ENCODE measurements at regions of chr1 and their contacts with region 1.

Region 1: DNA sequence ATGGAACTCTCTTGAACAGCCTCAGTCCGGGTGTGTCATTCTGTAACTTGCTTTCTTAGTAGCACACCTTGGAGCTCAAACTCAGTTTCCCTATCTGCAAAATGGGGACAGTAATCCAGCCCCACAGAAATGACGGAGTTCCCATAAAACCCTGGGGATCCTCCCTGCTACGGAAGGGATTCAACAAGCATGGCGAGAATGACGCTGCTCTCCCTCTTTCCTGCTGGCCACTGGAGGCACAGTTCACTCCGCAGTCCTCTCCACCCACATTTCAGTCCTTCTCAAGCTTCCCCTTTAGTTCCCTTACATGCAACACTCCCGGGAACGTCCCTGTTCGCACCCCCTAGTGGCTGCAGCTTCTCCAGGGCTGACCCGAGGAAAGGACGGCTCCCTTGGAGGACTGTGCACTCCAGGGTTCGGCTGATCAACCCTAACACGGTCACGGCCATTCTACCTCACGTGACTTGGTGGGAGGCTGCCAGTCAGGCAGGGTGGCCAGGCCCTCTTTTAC is 20.6 kb downstream of the RUNX3 start:
- DNase-seq: no peak
- H3K4me3 Mint-ChIP-seq: no peak overlapping the region
- H3K27ac Mint-ChIP-seq: peak overlapping the region; percentile 81
- H3K4me1 Mint-ChIP-seq: peaks cover 52% of the 10 kb centered on the region
- H3K27me3 Mint-ChIP-seq: no peaks in the 10 kb centered on the region

Region 2: GRCh38 chr1:24925082-24925779 is 15.8 kb after region 1 on chr1:
- CTCF ChIA-PET with region 1: interaction called, 6 read pairs
- POLR2A ChIA-PET with region 1: interaction called, 69 read pairs
- intact Hi-C with region 1: loop called (anchors 1 kb)
- DNase-seq: peak; percentile 95
- H3K4me3 Mint-ChIP-seq: peak overlapping the region; percentile 81
- H3K27ac Mint-ChIP-seq: peak overlapping the region; percentile 91
- H3K4me1 Mint-ChIP-seq: peaks cover 69% of the 10 kb centered on the region
- H3K27me3 Mint-ChIP-seq: no peaks in the 10 kb centered on the region

Region 3: GRCh38 chr1:25006770-25007169 is 97.3 kb after region 1 on chr1:
- CTCF ChIA-PET with region 1: no interaction called
- POLR2A ChIA-PET with region 1: no interaction called
- intact Hi-C with region 1: no loop called
- DNase-seq: no peak
- H3K4me3 Mint-ChIP-seq: no peak overlapping the region
- H3K27ac Mint-ChIP-seq: no peak overlapping the region
- H3K4me1 Mint-ChIP-seq: peaks cover 56% of the 10 kb centered on the region
- H3K27me3 Mint-ChIP-seq: no peaks in the 10 kb centered on the region

Region 4: DNA sequence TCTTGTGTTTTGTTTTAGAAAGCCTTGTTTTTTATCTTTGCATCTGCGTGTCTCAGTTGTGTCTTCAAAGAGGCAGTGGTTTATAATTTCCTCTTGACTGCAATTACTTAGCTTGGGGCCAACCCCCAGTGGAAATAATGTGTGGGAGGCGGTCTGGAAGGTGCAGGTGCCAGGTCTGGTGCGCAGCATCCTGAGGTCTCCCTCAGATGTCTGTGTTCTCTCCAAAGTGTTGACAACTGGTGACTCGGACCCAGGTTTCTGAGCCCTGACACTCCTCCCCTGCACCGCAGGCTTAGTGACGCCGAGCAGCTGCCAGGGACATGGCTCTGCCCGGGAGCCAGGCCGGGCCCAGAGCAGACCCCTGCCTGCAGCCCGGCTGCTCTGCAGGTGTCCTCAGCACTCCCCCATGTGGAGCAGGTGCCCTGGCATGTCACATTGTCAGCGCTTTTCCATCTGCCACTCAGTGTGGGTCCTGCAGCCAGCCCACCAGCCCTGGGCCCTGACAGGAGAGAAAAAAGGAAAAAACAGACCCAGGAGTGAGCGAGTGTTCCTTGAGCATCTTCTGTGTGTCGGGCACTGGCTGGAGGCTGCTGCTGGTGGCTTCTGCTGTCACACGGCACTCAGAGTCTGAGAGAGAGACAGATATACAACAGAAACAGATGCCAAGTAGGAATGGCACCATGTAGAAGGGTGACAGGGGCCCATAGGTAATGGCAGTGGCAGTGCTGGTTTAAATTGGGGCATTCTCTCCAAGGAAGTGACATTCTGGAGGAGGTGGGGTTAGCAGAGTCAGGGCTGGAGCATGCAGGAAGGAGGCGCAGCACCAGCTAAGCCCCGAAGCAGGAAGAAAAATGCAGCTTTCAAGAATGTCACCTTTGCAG is 865.7 kb after region 1 on chr1:
- CTCF ChIA-PET with region 1: no interaction called
- POLR2A ChIA-PET with region 1: no interaction called
- intact Hi-C with region 1: no loop called
- DNase-seq: peak; percentile 92
- H3K4me3 Mint-ChIP-seq: peak overlapping the region; percentile 58
- H3K27ac Mint-ChIP-seq: peak overlapping the region; percentile 64
- H3K4me1 Mint-ChIP-seq: peaks cover 48% of the 10 kb centered on the region
- H3K27me3 Mint-ChIP-seq: no peaks in the 10 kb centered on the region